H1 (cell line): ENCODE measurements at regions of chr9 and their contacts with region 1.

Region 1: GRCh38 chr9:33924978-33925797 is 108.2 kb downstream of the UBE2R2 start:
- DNase-seq: peak; percentile 29 to 73
- H3K4me3 ChIP-seq: no peak overlapping the region
- H3K27ac ChIP-seq: peak overlapping the region; percentile 38; the same call in 1 of the 2 replicates
- H3K4me1 ChIP-seq: peaks cover 0 to 2% (median 0%) of the 10 kb centered on the region in 4 experiments; a peak in 2 of 7 replicates
- H3K27me3 ChIP-seq: no peaks in the 10 kb centered on the region
- CTCF ChIP-seq: peak; percentile 68 to 79 (median 78)
- EP300 ChIP-seq: no peak
- POLR2A ChIP-seq: no peak
- RAD21 ChIP-seq: peak; percentile 54 to 70

Region 2: DNA sequence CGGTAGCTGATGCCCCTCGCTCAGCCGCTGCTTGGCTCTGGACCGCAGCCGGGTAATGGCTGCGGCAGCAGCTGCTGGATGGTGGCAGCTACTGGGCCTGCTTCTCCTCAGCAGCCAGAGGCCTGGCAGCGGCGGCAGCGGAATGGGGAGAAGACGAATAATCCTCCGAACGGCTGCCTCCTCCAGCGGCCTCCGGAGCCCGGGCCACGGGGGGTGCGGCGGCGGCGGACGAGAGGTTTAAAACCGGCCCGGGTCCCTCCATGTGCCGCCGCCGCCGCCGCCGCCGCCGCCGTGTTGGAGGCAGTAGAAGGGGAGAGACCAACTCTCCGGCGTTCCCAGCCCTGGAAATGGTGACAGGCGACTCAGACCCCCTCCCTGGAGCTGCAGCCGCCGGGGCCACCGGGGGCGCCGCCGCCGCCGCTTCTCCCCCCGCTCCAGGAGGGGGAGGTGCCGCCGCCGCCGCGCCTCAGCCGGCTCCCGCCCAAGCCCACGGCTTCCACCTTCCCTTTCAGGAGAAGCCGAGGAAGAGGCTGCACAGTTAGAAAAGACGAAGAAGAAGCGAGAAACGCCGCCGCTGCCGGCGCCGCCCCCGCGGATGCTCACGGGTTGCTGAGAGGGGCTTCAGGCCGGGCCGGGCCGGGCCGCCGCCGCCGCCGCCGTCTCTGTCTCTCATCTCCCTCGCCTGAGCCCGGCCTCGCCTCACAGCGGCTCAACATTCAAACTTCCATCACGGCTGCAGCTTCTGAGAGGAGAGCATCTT is 248.3 kb before region 1 on chr9:
- CTCF ChIA-PET with region 1: no interaction called
- POLR2A ChIA-PET with region 1: no interaction called
- DNase-seq: peak in 1 of 2 experiments; percentile 74
- H3K4me3 ChIP-seq: peak overlapping the region; percentile 36 to 71 (median 50)
- H3K27ac ChIP-seq: peak overlapping the region; percentile 66; the same call in 1 of the 2 replicates
- H3K4me1 ChIP-seq: peaks cover 0 to 6% (median under 1%) of the 10 kb centered on the region in 4 experiments; a peak in 2 of 7 replicates
- H3K27me3 ChIP-seq: no peaks in the 10 kb centered on the region
- CTCF ChIP-seq: no peak
- EP300 ChIP-seq: no peak
- POLR2A ChIP-seq: peak in 1 of 2 experiments; percentile 48; a peak in 2 of 3 replicates
- RAD21 ChIP-seq: no peak

Region 3: GRCh38 chr9:33905137-33905536 is 20.1 kb before region 1 on chr9:
- CTCF ChIA-PET with region 1: interaction called, 16 read pairs
- POLR2A ChIA-PET with region 1: no interaction called
- DNase-seq: no peak
- H3K4me3 ChIP-seq: no peak overlapping the region
- H3K27ac ChIP-seq: no peak overlapping the region
- H3K4me1 ChIP-seq: peaks cover 0 to 6% (median 2%) of the 10 kb centered on the region in 4 experiments; a peak in 2 of 7 replicates
- H3K27me3 ChIP-seq: no peaks in the 10 kb centered on the region
- CTCF ChIP-seq: no peak
- EP300 ChIP-seq: no peak
- POLR2A ChIP-seq: no peak
- RAD21 ChIP-seq: no peak

Region 4: DNA sequence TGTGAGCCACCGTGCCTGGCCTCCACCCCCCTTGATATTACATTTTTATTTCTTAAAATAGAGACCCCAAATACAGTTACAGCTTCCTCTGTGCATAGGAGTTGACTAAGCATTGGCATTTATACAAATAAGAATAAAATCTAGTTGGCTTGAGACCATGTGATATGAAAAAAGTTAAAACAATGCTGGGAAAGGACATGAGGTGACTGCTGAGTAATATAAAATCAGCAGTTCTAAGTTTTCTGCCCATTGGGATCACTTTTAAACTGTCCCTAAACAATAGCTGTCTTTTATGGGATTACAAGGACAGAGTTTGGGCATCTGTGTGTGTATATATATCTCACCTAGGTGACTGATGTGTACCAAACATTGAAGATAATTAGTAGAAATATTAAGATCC is 11.6 kb before region 1 on chr9:
- CTCF ChIA-PET with region 1: interaction called, 37 read pairs
- POLR2A ChIA-PET with region 1: no interaction called
- DNase-seq: no peak
- H3K4me3 ChIP-seq: no peak overlapping the region
- H3K27ac ChIP-seq: no peak overlapping the region
- H3K4me1 ChIP-seq: no peaks in the 10 kb centered on the region
- H3K27me3 ChIP-seq: no peaks in the 10 kb centered on the region
- CTCF ChIP-seq: no peak
- EP300 ChIP-seq: no peak
- POLR2A ChIP-seq: no peak
- RAD21 ChIP-seq: no peak